Naive thymus-derived CD4-positive, alpha-beta T cell (primary cell): ENCODE measurements at regions of chr3 and their contacts with region 1.

Region 1: GRCh38 chr3:59480486-59480995 is 430.7 kb upstream of the CFAP20DC start:
- DNase-seq: no peak
- ATAC-seq: no peak
- H3K4me3 ChIP-seq: no peak overlapping the region
- H3K4me3 Mint-ChIP-seq: peak overlapping the region in 1 of 10 donors; percentile 61
- H3K27ac ChIP-seq: no peak overlapping the region
- H3K27ac Mint-ChIP-seq: peak overlapping the region in 2 of 9 donors; percentile 28 to 78
- H3K4me1 ChIP-seq: no peaks in the 10 kb centered on the region
- H3K4me1 Mint-ChIP-seq: peaks cover 6 to 23% (median 12%) of the 10 kb centered on the region in 7 donors
- H3K27me3 ChIP-seq: no peaks in the 10 kb centered on the region
- H3K27me3 Mint-ChIP-seq: no peaks in the 10 kb centered on the region

Region 2: GRCh38 chr3:59467476-59467875 is 13.1 kb before region 1 on chr3:
- CTCF ChIA-PET with region 1: no interaction called
- POLR2A ChIA-PET with region 1: interaction called, 12 read pairs
- intact Hi-C with region 1: loop called in 1 of 2 experiments (anchors 2 kb)
- DNase-seq: no peak
- ATAC-seq: no peak
- H3K4me3 ChIP-seq: no peak overlapping the region
- H3K4me3 Mint-ChIP-seq: no peak overlapping the region
- H3K27ac ChIP-seq: no peak overlapping the region
- H3K27ac Mint-ChIP-seq: no peak overlapping the region
- H3K4me1 ChIP-seq: no peaks in the 10 kb centered on the region
- H3K4me1 Mint-ChIP-seq: peaks cover 0 to 29% (median 22%) of the 10 kb centered on the region in 7 donors
- H3K27me3 ChIP-seq: no peaks in the 10 kb centered on the region
- H3K27me3 Mint-ChIP-seq: no peaks in the 10 kb centered on the region